GM12878 (cell line): ENCODE measurements at regions of chr16 and their contacts with region 1.

Region 1: DNA sequence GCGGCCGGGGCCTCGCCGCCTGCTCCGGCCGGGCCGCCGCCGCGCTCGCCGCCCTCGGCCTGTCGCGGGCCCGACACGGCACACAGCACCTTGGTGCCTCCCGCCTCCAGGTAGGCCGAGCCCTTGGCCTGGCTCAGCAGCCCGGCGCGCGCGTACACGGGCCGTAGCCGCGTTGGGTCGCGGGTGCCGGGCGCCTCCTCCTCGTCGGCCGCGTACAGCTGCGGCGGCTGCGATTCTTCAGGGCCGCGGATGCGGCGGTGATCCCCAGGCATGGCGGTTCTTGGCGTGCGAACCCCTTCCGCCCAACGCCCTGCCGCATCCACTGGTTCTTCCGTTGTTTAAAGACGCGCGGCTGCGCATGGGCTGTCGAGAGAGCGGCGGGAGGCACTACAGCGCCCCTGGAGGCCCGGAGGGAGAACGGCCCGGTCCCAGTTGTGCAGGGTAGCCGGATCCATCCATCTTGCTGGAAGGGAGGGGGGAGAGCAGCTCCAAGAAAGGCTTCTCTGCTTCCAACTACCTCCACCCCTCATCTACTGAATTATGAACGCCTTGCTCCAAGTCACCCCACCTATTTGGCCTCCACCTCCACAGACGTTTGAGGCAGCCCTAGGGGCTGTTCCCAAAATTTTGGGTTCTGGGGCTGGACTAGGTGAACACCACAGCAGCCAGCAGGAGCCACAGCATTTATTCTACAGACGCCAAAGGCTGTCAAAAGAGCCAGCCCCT is at the start of gene EXOSC6:
- DNase-seq: peak; percentile 65
- ATAC-seq: peak; percentile 95
- H3K4me3 ChIP-seq: peak within 1 kb of the TSS; percentile 77
- H3K27ac ChIP-seq: peak within 1 kb of the TSS; percentile 71
- H3K4me1 ChIP-seq: no peaks in the 10 kb centered on the region
- H3K27me3 ChIP-seq: no peaks in the 10 kb centered on the region
- CTCF ChIP-seq: peak; percentile 94 to 99 (median 95); a peak in 5 of 6 replicates
- EP300 ChIP-seq: 0 out of 4 replicates have a peak, but pooled peaks of 1 of the 2 experiments have one; percentile 19
- POLR2A ChIP-seq: peak; percentile 97
- RAD21 ChIP-seq: no peak
- polyA plus RNA-seq, gene EXOSC6: 8.2 to 9.0 TPM

Region 2: DNA sequence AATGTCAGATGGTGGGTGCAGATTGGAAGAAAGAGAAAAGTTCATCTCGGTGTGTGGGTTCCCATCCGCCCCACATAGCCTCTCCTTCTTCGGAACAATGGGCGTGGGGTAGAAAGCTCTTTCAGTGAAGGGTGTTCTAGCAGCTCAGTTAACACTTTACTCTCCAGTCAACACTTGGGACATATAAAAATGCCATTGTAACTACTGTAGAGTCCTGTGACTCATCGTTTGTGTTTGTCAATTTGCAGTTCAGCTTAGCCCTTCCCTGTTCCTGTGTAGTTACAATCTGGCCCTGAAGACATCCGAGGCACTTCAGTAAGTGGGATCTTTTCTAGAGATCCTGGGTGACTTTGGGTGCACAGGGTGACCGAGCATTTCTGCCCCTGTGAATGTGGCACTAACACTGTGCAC is 89.7 kb before region 1 on chr16:
- CTCF ChIA-PET with region 1: interaction called, 3 read pairs
- POLR2A ChIA-PET with region 1: no interaction called
- RAD21 ChIA-PET with region 1: no interaction called
- SMC1A ChIA-PET with region 1: no interaction called
- in situ Hi-C with region 1: no loop called
- intact Hi-C with region 1: loop called (anchors 10 kb)
- DNase-seq: no peak
- ATAC-seq: no peak
- H3K4me3 ChIP-seq: no peak overlapping the region
- H3K27ac ChIP-seq: no peak overlapping the region
- H3K4me1 ChIP-seq: no peaks in the 10 kb centered on the region
- H3K27me3 ChIP-seq: no peaks in the 10 kb centered on the region
- CTCF ChIP-seq: no peak
- EP300 ChIP-seq: no peak
- POLR2A ChIP-seq: no peak
- RAD21 ChIP-seq: no peak

Region 3: GRCh38 chr16:70267516-70267915 is 15.7 kb after region 1 on chr16:
- CTCF ChIA-PET with region 1: interaction called, 14 read pairs
- POLR2A ChIA-PET with region 1: interaction called, 3 read pairs
- RAD21 ChIA-PET with region 1: no interaction called
- SMC1A ChIA-PET with region 1: interaction called, 3 read pairs
- in situ Hi-C with region 1: no loop called
- intact Hi-C with region 1: no loop called
- DNase-seq: no peak
- ATAC-seq: peak; percentile 67
- H3K4me3 ChIP-seq: no peak overlapping the region
- H3K27ac ChIP-seq: no peak overlapping the region
- H3K4me1 ChIP-seq: no peaks in the 10 kb centered on the region
- H3K27me3 ChIP-seq: no peaks in the 10 kb centered on the region
- CTCF ChIP-seq: peak; percentile 49 to 62 (median 58)
- EP300 ChIP-seq: no peak
- POLR2A ChIP-seq: no peak
- RAD21 ChIP-seq: peak; percentile 38; the same call in 1 of the 2 replicates

Region 4: GRCh38 chr16:70304892-70305448 is 53.2 kb after region 1 on chr16:
- CTCF ChIA-PET with region 1: no interaction called
- POLR2A ChIA-PET with region 1: no interaction called
- RAD21 ChIA-PET with region 1: no interaction called
- SMC1A ChIA-PET with region 1: no interaction called
- in situ Hi-C with region 1: no loop called
- intact Hi-C with region 1: no loop called
- DNase-seq: no peak
- ATAC-seq: peak; percentile 52
- H3K4me3 ChIP-seq: peak overlapping the region; percentile 37; the same call in 1 of the 2 replicates
- H3K27ac ChIP-seq: peak overlapping the region; percentile 58
- H3K4me1 ChIP-seq: peaks cover 5% of the 10 kb centered on the region
- H3K27me3 ChIP-seq: no peaks in the 10 kb centered on the region
- CTCF ChIP-seq: no peak
- EP300 ChIP-seq: no peak
- POLR2A ChIP-seq: no peak
- RAD21 ChIP-seq: no peak

Region 5: DNA sequence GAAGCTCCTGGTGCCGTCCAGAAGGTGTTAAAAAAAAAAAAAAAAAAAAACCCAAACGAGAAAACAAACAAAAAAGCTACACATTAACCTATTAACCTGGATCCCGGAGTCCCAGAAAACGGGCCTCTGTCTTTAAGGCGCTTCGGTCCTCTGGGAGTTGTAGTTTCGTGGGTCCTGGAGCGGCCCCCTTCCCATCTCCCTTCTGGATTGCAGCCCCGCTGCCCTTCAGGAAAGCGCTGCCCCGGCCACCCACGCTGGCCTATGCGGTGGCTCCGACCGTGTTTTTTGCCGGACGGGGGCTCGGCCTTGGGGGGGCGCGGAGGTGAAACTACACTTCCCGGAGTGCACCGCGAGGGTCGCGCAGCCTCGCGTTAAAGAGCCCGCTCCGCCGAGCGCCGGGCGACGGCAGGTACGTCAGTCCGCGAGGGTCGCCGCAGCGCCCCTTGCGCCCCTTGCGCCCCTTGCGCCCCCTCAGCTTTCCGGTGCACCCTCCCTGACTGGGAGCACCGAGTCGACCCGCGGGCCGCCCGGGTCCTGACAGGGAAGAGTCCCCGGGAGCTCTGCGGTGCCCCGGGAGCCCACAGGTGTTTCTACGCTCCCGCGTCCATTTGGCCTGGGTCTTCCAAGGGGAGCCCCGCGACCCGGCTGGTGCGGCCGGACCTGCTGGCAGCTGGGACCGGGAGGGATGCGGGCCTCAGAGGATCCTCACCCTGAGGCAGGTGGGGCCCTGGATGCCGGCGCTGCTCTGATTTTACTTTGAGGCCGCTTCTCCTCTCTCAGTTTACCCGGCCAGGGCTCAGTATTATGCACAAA is 202.6 kb after region 1 on chr16 and contains the start of gene FCSK:
- CTCF ChIA-PET with region 1: no interaction called
- POLR2A ChIA-PET with region 1: no interaction called
- RAD21 ChIA-PET with region 1: no interaction called
- SMC1A ChIA-PET with region 1: no interaction called
- in situ Hi-C with region 1: no loop called
- intact Hi-C with region 1: no loop called
- DNase-seq: no peak
- ATAC-seq: peak; percentile 93
- H3K4me3 ChIP-seq: peak within 1 kb of the TSS; percentile 93
- H3K27ac ChIP-seq: peak within 1 kb of the TSS; percentile 95
- H3K4me1 ChIP-seq: no peaks in the 10 kb centered on the region
- H3K27me3 ChIP-seq: no peaks in the 10 kb centered on the region
- CTCF ChIP-seq: peak; percentile 13 to 22 (median 21); a peak in 3 of 6 replicates
- EP300 ChIP-seq: no peak
- POLR2A ChIP-seq: peak; percentile 74
- RAD21 ChIP-seq: no peak
- polyA plus RNA-seq, gene FCSK: 0.60 to 1.5 TPM

Region 6: DNA sequence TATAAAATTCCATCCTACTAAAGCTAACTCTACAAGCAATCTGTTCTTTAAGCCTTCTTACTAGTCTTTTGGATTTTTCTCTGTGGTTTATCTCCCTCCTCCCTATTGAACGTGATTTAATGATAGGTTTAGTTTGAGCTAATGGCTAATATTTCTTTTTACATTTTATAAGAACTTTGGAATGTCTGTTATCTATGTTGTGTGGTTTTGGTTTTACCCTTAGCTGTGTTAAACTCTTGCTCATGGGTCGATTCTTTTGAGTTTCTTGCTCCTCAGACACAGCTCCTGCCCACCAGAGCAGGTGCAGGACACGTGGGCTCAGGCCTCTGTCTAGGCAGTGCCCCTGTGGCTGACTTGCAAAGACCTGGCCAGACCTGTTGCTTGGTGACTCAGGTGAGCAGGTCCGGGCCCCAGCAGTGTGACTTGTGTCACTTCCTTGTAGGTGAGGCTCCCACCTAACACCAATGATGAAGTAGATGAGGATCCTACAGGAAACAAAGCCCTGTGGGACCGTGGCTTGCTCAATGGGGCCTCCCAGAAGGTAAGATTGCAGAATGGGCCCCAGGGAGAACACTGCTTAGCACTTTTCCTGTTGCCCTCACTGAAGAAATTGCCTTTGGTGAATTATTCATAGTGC is 316.9 kb after region 1 on chr16:
- CTCF ChIA-PET with region 1: no interaction called
- POLR2A ChIA-PET with region 1: interaction called, 11 read pairs
- RAD21 ChIA-PET with region 1: no interaction called
- SMC1A ChIA-PET with region 1: no interaction called
- in situ Hi-C with region 1: no loop called
- intact Hi-C with region 1: no loop called
- DNase-seq: no peak
- ATAC-seq: no peak
- H3K4me3 ChIP-seq: no peak overlapping the region
- H3K27ac ChIP-seq: no peak overlapping the region
- H3K4me1 ChIP-seq: no peaks in the 10 kb centered on the region
- H3K27me3 ChIP-seq: no peaks in the 10 kb centered on the region
- CTCF ChIP-seq: no peak
- EP300 ChIP-seq: no peak
- POLR2A ChIP-seq: peak; percentile 28; the same call in 1 of the 2 replicates
- RAD21 ChIP-seq: no peak